Left cardiac atrium (tissue), 4 donors: ENCODE measurements at regions of chrX and their contacts with region 1.

Region 1: GRCh38 chrX:103214870-103215424 is at the start of gene BEX4:
- DNase-seq: peak; percentile 87
- ATAC-seq: peak; percentile 98 to 100
- total RNA-seq, gene BEX4: 47.5 to 68.8 TPM

Region 2: GRCh38 chrX:103248553-103248952 is 33.6 kb after region 1 on chrX:
- intact Hi-C with region 1: loop called in 1 of 2 experiments (anchors 5 kb)
- DNase-seq: no peak
- ATAC-seq: no peak